Transverse colon (tissue), 4 donors: ENCODE measurements at regions of chr20 and their contacts with region 1.

Region 1: GRCh38 chr20:58850693-58851174 is at the start of gene GNAS-AS1:
- DNase-seq: peak; percentile 81
- H3K4me3 ChIP-seq: peak within 1 kb of the TSS; percentile 22 to 41 (median 30)
- H3K27ac ChIP-seq: no peak within 1 kb of the TSS
- H3K4me1 ChIP-seq: peaks cover 0 to 26% (median 9%) of the 10 kb centered on the region in 4 donors
- H3K27me3 ChIP-seq: peaks cover 68% of the 10 kb centered on the region
- CTCF ChIP-seq: no peak
- EP300 ChIP-seq: no peak
- POLR2A ChIP-seq: no peak
- total RNA-seq, gene GNAS-AS1: 0.55 to 1.1 TPM in 2 of 4 donors, not detected in the others

Region 2: GRCh38 chr20:58236612-58237330 is 614.0 kb before region 1 on chr20:
- in situ Hi-C with region 1: loop called in 2 of 4 experiments (anchors 25 kb)
- intact Hi-C with region 1: no loop called
- DNase-seq: peak; percentile 74
- H3K4me3 ChIP-seq: peak overlapping the region; percentile 6 to 58 (median 42)
- H3K27ac ChIP-seq: peak overlapping the region in 3 of 4 donors; percentile 19 to 32 (median 28)
- H3K4me1 ChIP-seq: peaks cover 0 to 8% (median 0%) of the 10 kb centered on the region in 4 donors
- H3K27me3 ChIP-seq: no peaks in the 10 kb centered on the region
- CTCF ChIP-seq: peak; percentile 86 to 98 (median 96)
- EP300 ChIP-seq: no peak
- POLR2A ChIP-seq: no peak

Region 3: DNA sequence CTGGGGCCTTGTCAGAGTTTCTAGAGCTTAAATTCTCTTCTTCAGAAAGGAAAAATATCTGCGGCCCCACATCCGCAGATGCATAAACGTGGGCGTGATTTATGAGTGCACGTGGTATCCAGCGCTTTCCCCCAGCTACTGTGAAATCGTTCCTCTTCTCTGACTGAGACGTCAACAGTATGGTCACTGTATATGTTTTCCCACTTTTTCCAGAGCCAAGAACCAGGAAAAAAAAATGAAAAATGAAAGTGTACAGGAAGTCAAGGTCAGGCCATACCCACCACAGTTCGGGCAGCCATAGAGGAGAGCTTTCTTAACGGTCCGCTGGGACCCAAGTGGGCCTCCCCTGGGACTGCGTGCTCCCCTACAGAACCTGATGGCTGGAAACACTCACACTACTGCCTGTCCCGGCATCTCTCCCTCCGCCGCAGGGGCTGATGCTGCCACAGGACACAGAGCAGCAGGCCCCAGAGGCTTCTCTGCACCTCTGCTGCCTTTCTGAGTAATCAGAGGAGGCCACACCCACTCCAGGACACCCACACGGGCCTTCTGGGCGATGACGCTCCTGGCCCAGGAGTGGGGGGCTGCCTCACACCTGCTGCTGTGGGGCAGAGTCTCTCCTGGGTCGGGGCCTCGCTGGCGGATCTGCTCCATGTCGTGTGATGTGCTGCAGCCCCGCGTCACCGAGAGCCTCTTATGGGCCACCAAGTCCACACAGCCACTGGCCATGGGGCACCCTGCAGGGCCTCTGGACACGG is 216.0 kb before region 1 on chr20:
- in situ Hi-C with region 1: no loop called
- intact Hi-C with region 1: no loop called
- DNase-seq: no peak
- H3K4me3 ChIP-seq: no peak overlapping the region
- H3K27ac ChIP-seq: peak overlapping the region in 3 of 4 donors; percentile 33 to 57 (median 45)
- H3K4me1 ChIP-seq: peaks cover 5 to 10% (median 7%) of the 10 kb centered on the region in 4 donors
- H3K27me3 ChIP-seq: no peaks in the 10 kb centered on the region
- CTCF ChIP-seq: no peak
- EP300 ChIP-seq: no peak
- POLR2A ChIP-seq: no peak

Region 4: GRCh38 chr20:58650776-58651558 is 199.8 kb before region 1 on chr20 and contains the start of gene STX16:
- in situ Hi-C with region 1: loop called in 1 of 4 experiments (anchors 25 kb)
- intact Hi-C with region 1: no loop called
- DNase-seq: peak; percentile 93
- H3K4me3 ChIP-seq: peak within 1 kb of the TSS; percentile 62 to 98 (median 92)
- H3K27ac ChIP-seq: peak within 1 kb of the TSS; percentile 96 to 99 (median 98)
- H3K4me1 ChIP-seq: peaks cover 10 to 37% (median 23%) of the 10 kb centered on the region in 4 donors
- H3K27me3 ChIP-seq: no peaks in the 10 kb centered on the region
- CTCF ChIP-seq: peak; percentile 54 to 90 (median 72)
- EP300 ChIP-seq: no peak
- POLR2A ChIP-seq: peak; percentile 87
- total RNA-seq, gene STX16: 52.3 to 146 (median 77.0) TPM

Region 5: DNA sequence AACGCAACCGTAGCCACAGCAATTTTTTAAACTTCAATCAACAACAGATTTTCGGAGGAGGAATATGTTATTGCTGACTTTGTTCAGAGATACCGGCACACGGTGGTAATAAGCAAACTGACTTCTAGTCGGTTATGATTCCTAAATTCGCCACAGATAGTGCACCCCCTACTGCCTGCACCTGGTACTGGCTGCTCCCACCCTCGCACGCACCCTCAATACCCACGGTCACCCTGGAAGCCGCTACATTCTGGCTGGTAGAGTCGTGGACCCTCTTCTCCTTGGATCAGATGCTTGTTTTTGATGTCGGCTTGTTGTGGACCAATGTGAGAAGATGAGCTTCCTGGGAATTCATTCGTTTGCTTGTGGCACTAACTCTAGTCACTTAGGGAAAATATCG is 147.5 kb before region 1 on chr20:
- in situ Hi-C with region 1: no loop called
- intact Hi-C with region 1: no loop called
- DNase-seq: peak; percentile 6
- H3K4me3 ChIP-seq: no peak overlapping the region
- H3K27ac ChIP-seq: no peak overlapping the region
- H3K4me1 ChIP-seq: no peaks in the 10 kb centered on the region
- H3K27me3 ChIP-seq: no peaks in the 10 kb centered on the region
- CTCF ChIP-seq: no peak
- EP300 ChIP-seq: no peak
- POLR2A ChIP-seq: no peak

Region 6: GRCh38 chr20:58753267-58753921 is 97.3 kb before region 1 on chr20:
- in situ Hi-C with region 1: loop called in 1 of 4 experiments (anchors 25 kb)
- intact Hi-C with region 1: no loop called
- DNase-seq: no peak
- H3K4me3 ChIP-seq: no peak overlapping the region
- H3K27ac ChIP-seq: no peak overlapping the region
- H3K4me1 ChIP-seq: no peaks in the 10 kb centered on the region
- H3K27me3 ChIP-seq: peaks cover 7% of the 10 kb centered on the region
- CTCF ChIP-seq: no peak
- EP300 ChIP-seq: no peak
- POLR2A ChIP-seq: no peak

Region 7: DNA sequence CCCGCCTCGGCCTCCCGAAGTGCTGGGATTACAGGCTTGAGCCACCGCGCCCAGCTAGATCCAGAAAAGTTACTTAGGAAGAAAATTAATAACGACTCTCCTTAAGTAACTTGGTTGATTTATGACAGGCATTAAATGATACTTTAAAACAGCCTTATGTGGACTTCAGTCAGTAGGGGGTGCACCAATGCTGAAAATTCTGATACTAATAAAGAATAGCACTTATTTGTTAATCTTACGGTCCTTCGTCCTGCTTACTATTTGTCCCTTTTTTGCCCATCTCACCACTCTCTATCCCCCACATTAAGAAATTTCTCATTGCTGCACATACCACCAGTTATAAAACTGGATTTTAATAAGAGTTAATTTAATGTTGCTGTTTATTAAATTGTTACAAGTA is 204.6 kb after region 1 on chr20:
- in situ Hi-C with region 1: no loop called
- intact Hi-C with region 1: no loop called
- DNase-seq: no peak
- H3K4me3 ChIP-seq: no peak overlapping the region
- H3K27ac ChIP-seq: no peak overlapping the region
- H3K4me1 ChIP-seq: peaks cover 0 to 5% (median 0%) of the 10 kb centered on the region in 4 donors
- H3K27me3 ChIP-seq: peaks cover 7% of the 10 kb centered on the region
- CTCF ChIP-seq: peak in 3 of 5 experiments; percentile 10 to 17 (median 16)
- EP300 ChIP-seq: no peak
- POLR2A ChIP-seq: no peak

Region 8: GRCh38 chr20:59087829-59088433 is 237.2 kb after region 1 on chr20:
- in situ Hi-C with region 1: loop called in 1 of 4 experiments (anchors 25 kb)
- intact Hi-C with region 1: no loop called
- DNase-seq: peak; percentile 89
- H3K4me3 ChIP-seq: no peak overlapping the region
- H3K27ac ChIP-seq: no peak overlapping the region
- H3K4me1 ChIP-seq: no peaks in the 10 kb centered on the region
- H3K27me3 ChIP-seq: peaks cover 3% of the 10 kb centered on the region
- CTCF ChIP-seq: peak; percentile 89 to 95 (median 94)
- EP300 ChIP-seq: no peak
- POLR2A ChIP-seq: no peak

Region 9: DNA sequence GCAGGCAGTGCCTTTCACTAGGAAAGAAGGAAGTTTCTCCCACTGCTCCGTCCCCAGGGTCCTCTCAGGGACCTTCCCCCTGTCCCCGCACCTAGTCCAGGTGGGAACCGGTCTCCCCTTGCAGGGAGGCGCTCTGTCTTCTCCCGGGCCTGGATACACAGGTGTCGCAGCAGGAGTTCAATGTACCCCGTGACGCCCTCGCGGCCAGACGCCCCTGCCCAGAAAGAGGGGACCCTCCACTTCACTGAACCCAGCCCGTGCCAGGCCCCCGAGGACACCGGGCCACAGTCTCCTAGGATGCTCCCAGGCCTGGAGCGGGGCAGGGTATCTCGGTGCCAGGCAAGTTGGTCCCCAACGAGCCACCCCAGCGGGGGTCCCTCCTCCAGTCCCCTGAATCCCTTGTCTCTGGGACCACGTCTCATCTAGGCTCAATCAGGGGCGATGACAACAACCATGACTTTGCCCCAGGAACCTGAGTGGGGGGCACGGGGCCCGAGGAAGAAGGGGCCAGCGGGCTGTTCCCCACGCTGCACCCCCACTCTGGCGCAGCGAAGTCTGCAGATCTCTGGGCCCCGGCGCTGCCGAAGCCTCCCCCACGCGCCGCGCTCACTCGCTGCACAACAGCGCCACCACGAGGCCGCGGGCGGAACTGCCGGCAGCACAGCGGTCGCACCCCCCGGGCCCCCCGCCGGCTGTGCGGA is 552.7 kb after region 1 on chr20:
- in situ Hi-C with region 1: loop called in 2 of 4 experiments (anchors 25 kb)
- intact Hi-C with region 1: no loop called
- DNase-seq: peak; percentile 62
- H3K4me3 ChIP-seq: peak overlapping the region in 2 of 4 donors; percentile 1 to 23
- H3K27ac ChIP-seq: no peak overlapping the region
- H3K4me1 ChIP-seq: peaks cover 7 to 18% (median 11%) of the 10 kb centered on the region in 4 donors
- H3K27me3 ChIP-seq: peaks cover 72% of the 10 kb centered on the region
- CTCF ChIP-seq: peak; percentile 91 to 100 (median 99)
- EP300 ChIP-seq: no peak
- POLR2A ChIP-seq: no peak

Region 10: GRCh38 chr20:59455402-59456341 is 604.9 kb after region 1 on chr20:
- in situ Hi-C with region 1: loop called in 1 of 4 experiments (anchors 25 kb)
- intact Hi-C with region 1: no loop called
- DNase-seq: no peak
- H3K4me3 ChIP-seq: no peak overlapping the region
- H3K27ac ChIP-seq: no peak overlapping the region
- H3K4me1 ChIP-seq: no peaks in the 10 kb centered on the region
- H3K27me3 ChIP-seq: no peaks in the 10 kb centered on the region
- CTCF ChIP-seq: peak; percentile 53 to 66 (median 53)
- EP300 ChIP-seq: no peak
- POLR2A ChIP-seq: no peak